Activated naive CD4-positive, alpha-beta T cell treated with anti-CD3 and anti-CD28 coated beads, Interleukin-2, amount 10 ng/mL, durations not matched to agents 7 days and 5 days (primary cell): ENCODE measurements at regions of chr22 and their contacts with region 1.

Region 1: DNA sequence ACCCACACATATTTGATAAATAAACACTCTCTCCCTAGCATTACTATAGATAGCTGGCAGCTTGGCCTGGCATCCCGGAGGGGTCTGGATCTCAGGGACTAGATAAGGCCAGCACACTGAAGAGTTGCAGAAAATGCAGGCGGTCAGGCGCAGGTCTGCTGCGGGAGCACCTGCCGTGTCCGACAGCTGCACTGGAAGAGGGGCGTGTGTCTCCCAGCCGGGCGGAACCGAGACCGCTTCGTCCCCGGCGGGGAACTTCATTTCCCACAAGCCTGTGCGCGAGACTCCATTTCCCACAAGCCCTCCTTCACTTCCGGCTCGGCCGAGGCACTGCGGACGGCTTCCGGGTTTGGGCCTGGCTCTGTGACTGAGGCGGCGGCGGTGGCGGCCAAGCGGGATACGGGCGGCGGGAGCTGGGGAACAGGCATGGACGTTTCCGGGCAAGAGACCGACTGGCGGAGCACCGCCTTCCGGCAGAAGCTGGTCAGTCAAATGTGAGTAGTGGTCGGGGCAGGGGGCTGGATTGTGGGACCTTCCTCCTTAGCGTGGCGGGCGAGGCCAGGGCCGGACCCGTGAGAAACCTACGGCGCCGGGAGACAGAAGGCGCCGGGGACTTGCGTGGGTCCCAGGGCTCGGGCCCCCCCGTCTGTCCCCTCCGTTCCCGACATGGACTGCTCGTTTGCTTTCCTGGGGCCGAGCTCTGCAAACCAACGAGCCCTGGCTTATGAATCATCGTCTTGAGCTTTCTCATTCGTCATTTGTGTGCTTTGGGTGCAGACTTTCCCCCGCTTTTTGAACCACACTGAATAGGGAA is at the start of gene MED15:
- DNase-seq: peak; percentile 95
- H3K4me3 Mint-ChIP-seq: peak within 1 kb of the TSS; percentile 92
- H3K27ac Mint-ChIP-seq: peak within 1 kb of the TSS; percentile 97
- H3K4me1 Mint-ChIP-seq: peaks cover 47% of the 10 kb centered on the region
- H3K27me3 Mint-ChIP-seq: no peaks in the 10 kb centered on the region

Region 2: DNA sequence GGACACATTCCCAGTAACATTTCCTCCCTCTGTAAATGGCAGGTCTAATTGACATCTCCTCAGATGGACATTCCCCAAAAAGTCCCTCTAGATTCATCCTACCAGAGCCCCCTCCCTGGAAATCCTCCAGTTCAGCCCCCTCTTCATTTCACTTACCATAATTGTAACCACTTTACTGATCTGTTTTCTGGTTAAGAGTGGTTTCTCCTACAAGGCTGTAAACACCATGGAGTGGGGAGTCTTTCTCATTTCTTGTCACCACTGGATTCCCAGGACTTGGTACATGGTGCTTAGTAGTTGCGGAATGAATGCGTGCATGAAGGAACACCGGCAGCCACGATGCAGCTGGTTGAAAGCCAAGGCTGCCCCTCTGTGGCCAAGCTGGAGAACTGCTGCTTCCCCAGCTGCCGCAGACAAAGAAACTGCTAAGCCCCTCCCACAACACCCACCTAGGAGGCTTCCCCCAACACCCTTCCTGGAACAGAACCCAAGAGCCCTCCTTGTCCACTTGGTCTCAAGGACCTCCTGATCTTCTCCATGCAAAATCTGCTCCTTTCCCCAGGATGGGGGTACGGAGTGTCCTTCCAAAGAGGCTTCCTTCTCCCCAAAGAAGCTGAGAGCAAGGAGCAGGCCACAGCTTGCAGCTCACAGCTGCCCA is 51.3 kb before region 1 on chr22:
- CTCF ChIA-PET with region 1: no interaction called
- DNase-seq: peak; percentile 82
- H3K4me3 Mint-ChIP-seq: no peak overlapping the region
- H3K27ac Mint-ChIP-seq: no peak overlapping the region
- H3K4me1 Mint-ChIP-seq: peaks cover 23% of the 10 kb centered on the region
- H3K27me3 Mint-ChIP-seq: no peaks in the 10 kb centered on the region

Region 3: GRCh38 chr22:20558567-20559205 is 51.2 kb after region 1 on chr22:
- CTCF ChIA-PET with region 1: interaction called, 17 read pairs
- DNase-seq: peak; percentile 19
- H3K4me3 Mint-ChIP-seq: no peak overlapping the region
- H3K27ac Mint-ChIP-seq: peak overlapping the region; percentile 98
- H3K4me1 Mint-ChIP-seq: peaks cover 84% of the 10 kb centered on the region
- H3K27me3 Mint-ChIP-seq: no peaks in the 10 kb centered on the region

Region 4: GRCh38 chr22:20566420-20567260 is 59.2 kb after region 1 on chr22:
- CTCF ChIA-PET with region 1: interaction called, 17 read pairs
- DNase-seq: peak; percentile 74
- H3K4me3 Mint-ChIP-seq: peak overlapping the region; percentile 66
- H3K27ac Mint-ChIP-seq: peak overlapping the region; percentile 97
- H3K4me1 Mint-ChIP-seq: peaks cover 93% of the 10 kb centered on the region
- H3K27me3 Mint-ChIP-seq: no peaks in the 10 kb centered on the region